Lower leg skin (tissue), 4 donors: ENCODE measurements at regions of chr6 and their contacts with region 1.

Region 1: GRCh38 chr6:125314019-125314581 is 12.3 kb upstream of the HDDC2 start:
- DNase-seq: peak in 1 of 2 donors; percentile 66
- H3K4me3 ChIP-seq: no peak overlapping the region
- CTCF ChIP-seq: no peak
- POLR2A ChIP-seq: no peak

Region 2: GRCh38 chr6:125765944-125766343 is 451.8 kb after region 1 on chr6:
- intact Hi-C with region 1: loop called (anchors 5 kb)
- DNase-seq: no peak
- H3K4me3 ChIP-seq: no peak overlapping the region
- CTCF ChIP-seq: no peak
- POLR2A ChIP-seq: no peak